ENCODE measurements at regions of chr12 and their contacts with region 1.

Region 1: GRCh38 chr12:67268896-67269631 is at the start of gene CAND1:
- DNase-seq: peak; percentile 97 to 98
- ATAC-seq: peak; percentile 89 to 92
- H3K4me3 ChIP-seq: peak within 1 kb of the TSS; percentile 63 to 96 (median 86)
- H3K27ac ChIP-seq: peak within 1 kb of the TSS; percentile 94 to 98 (median 97)
- H3K4me1 ChIP-seq: peaks cover 38 to 43% of the 10 kb centered on the region in 2 donors
- H3K27me3 ChIP-seq: no peaks in the 10 kb centered on the region
- CTCF ChIP-seq: no peak
- POLR2A ChIP-seq: peak; percentile 81 to 89
- total RNA-seq, gene CAND1: 10.5 to 23.0 (median 13.1) TPM

Region 2: GRCh38 chr12:67394550-67394949 is 125.5 kb after region 1 on chr12:
- in situ Hi-C with region 1: no loop called
- intact Hi-C with region 1: loop called (anchors 1 kb)
- DNase-seq: peak; percentile 77 to 86
- ATAC-seq: peak; percentile 90 to 97
- H3K4me3 ChIP-seq: no peak overlapping the region
- H3K27ac ChIP-seq: peak overlapping the region; percentile 64 to 79 (median 72)
- H3K4me1 ChIP-seq: peaks cover 22 to 36% of the 10 kb centered on the region in 2 donors
- H3K27me3 ChIP-seq: no peaks in the 10 kb centered on the region
- CTCF ChIP-seq: peak in 3 of 5 experiments; percentile 36 to 63 (median 60)
- POLR2A ChIP-seq: no peak

Region 3: DNA sequence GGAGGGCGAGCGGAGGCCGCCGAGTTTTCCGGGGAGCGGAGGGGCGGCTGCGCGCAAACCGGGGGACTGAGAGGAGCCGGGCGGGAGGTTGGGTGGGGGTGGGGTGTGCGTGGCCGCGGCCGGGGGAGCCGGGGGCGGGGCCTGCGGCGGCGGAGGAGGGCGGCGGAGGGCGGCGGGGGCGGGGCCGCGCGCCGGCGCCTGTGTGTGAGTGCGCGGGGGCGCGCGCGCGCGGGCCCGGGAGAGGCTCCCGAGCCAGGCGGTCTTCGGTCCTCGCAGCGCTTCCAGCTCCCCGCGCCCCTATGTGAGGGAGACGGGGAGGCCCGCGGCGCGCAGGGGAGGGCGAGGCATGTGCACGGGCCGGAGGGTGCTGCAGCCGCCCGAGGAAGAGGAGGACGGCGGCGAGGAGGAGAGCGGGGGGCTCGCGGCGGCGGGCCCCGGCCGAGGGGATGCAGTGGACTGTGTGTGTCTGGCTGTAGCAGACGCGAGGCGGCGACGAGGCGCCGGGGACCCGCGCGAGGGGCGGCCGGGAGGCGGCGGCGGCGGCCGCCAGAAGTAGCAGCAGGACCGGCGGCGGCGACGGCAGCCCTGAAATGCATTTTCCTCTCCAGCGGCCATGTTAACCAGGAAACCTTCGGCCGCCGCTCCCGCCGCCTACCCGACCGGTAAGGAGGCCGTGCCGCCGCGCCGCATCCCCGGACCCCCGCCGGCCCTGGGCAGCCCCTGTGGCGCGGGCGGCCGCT is 379.6 kb after region 1 on chr12 and contains the start of gene DYRK2:
- in situ Hi-C with region 1: no loop called
- intact Hi-C with region 1: loop called (anchors 10 kb)
- DNase-seq: peak; percentile 56 to 78
- ATAC-seq: peak; percentile 51
- H3K4me3 ChIP-seq: peak within 1 kb of the TSS; percentile 94 to 98 (median 98)
- H3K27ac ChIP-seq: peak within 1 kb of the TSS; percentile 98 to 100 (median 99)
- H3K4me1 ChIP-seq: peaks cover 36 to 42% of the 10 kb centered on the region in 2 donors
- H3K27me3 ChIP-seq: no peaks in the 10 kb centered on the region
- CTCF ChIP-seq: peak in 3 of 5 experiments; percentile 14 to 18 (median 14)
- POLR2A ChIP-seq: peak; percentile 84 to 89
- total RNA-seq, gene DYRK2: 14.1 to 25.7 (median 15.9) TPM

Region 4: GRCh38 chr12:68686595-68687521 is 1417.8 kb after region 1 on chr12 and contains the start of gene NUP107:
- in situ Hi-C with region 1: loop called in 1 of 4 experiments (anchors 25 kb)
- intact Hi-C with region 1: no loop called
- DNase-seq: peak; percentile 96 to 97
- ATAC-seq: peak; percentile 100
- H3K4me3 ChIP-seq: peak within 1 kb of the TSS; percentile 87 to 100 (median 96)
- H3K27ac ChIP-seq: peak within 1 kb of the TSS; percentile 70 to 87 (median 86)
- H3K4me1 ChIP-seq: peaks cover 13 to 18% of the 10 kb centered on the region in 2 donors
- H3K27me3 ChIP-seq: no peaks in the 10 kb centered on the region
- CTCF ChIP-seq: peak in 3 of 5 experiments; percentile 9 to 18 (median 16)
- POLR2A ChIP-seq: peak; percentile 16 to 37
- total RNA-seq, gene NUP107: 13.0 to 43.1 (median 25.9) TPM

Region 5: DNA sequence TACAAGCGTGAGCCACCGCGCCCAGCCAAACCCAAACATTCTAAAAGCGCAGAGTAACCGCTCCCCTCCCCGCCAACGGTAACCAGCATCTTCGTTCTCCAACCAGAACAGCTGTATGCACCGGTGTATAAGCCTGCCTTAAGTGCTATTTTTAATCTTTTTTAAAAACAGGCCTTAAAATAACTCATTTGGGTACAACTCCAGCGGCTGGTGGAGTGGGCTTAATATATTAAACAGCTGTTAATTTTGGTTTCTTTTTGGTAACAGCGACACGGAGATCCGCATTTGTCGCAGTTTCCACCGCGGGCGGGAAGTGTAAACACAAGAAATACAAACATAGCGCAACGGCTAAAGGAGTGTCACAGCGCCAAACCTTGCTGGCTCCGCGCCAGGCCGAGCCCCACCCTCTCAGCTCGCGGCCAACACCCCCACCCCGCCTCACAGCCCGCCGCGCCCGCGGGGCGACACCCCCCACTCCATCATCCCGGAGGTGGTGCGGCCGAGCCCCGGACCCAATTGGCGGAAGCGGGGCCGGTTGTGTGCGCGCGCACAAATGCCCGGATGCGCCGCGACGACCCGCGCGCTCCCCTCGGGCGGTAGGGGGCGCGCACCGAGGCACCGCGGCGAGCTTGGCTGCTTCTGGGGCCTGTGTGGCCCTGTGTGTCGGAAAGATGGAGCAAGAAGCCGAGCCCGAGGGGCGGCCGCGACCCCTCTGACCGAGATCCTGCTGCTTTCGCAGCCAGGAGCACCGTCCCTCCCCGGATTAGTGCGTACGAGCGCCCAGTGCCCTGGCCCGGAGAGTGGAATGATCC is 1538.7 kb after region 1 on chr12 and contains the start of gene MDM2:
- in situ Hi-C with region 1: no loop called
- intact Hi-C with region 1: loop called (anchors 5 kb)
- DNase-seq: peak; percentile 87 to 93
- ATAC-seq: peak; percentile 85 to 91
- H3K4me3 ChIP-seq: peak within 1 kb of the TSS; percentile 88 to 98 (median 96)
- H3K27ac ChIP-seq: peak within 1 kb of the TSS; percentile 97 to 99 (median 98)
- H3K4me1 ChIP-seq: peaks cover 0 to 13% of the 10 kb centered on the region in 2 donors
- H3K27me3 ChIP-seq: no peaks in the 10 kb centered on the region
- CTCF ChIP-seq: peak; percentile 81 to 91 (median 86)
- POLR2A ChIP-seq: peak; percentile 84 to 90
- total RNA-seq, gene MDM2: 61.6 to 92.2 (median 70.0) TPM